ENCODE measurements at regions of chr16 and their contacts with region 1.

Region 1: DNA sequence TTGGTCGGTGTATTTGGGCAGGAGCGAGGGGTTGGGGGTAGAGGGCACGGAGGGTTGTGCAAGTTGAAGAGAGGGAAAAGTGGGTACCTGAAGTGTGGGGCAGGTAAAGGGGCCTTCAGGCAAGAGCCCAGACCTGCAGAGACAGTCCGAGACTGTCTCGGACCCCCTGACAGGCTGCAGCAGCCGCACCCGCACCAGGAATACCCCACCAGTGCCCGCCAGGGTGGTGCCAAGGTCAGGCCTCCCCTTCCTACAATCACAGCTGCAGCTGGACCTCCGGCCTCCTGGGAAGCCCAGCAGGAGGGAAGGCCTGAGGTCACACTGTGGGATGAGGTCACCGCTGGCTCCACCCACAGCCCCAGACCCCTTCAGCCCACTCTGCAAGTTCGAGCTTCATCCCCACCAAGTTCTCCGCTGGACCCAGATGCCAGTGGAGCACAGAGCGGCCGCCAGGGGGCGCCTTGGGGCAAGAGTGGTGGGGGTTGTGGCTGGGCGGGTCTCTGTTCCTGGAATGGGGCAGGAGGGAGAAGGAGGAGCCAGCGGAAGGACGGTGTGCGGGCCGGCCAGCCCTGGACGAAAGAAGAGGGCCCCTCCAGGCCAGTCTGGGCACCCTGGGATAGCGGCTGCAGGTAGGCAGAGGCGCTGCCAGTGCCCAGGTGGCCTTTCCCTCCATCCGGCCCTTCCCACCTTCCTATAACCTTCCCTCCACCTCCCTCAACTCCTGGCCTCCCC is at the start of gene HSD3B7:
- DNase-seq: peak; percentile 95
- CTCF ChIP-seq: peak; percentile 85

Region 2: GRCh38 chr16:30893744-30894539 is 90.9 kb before region 1 on chr16 and contains the start of gene BCL7C:
- in situ Hi-C with region 1: no loop called
- DNase-seq: peak; percentile 93
- CTCF ChIP-seq: peak; percentile 74

Region 3: DNA sequence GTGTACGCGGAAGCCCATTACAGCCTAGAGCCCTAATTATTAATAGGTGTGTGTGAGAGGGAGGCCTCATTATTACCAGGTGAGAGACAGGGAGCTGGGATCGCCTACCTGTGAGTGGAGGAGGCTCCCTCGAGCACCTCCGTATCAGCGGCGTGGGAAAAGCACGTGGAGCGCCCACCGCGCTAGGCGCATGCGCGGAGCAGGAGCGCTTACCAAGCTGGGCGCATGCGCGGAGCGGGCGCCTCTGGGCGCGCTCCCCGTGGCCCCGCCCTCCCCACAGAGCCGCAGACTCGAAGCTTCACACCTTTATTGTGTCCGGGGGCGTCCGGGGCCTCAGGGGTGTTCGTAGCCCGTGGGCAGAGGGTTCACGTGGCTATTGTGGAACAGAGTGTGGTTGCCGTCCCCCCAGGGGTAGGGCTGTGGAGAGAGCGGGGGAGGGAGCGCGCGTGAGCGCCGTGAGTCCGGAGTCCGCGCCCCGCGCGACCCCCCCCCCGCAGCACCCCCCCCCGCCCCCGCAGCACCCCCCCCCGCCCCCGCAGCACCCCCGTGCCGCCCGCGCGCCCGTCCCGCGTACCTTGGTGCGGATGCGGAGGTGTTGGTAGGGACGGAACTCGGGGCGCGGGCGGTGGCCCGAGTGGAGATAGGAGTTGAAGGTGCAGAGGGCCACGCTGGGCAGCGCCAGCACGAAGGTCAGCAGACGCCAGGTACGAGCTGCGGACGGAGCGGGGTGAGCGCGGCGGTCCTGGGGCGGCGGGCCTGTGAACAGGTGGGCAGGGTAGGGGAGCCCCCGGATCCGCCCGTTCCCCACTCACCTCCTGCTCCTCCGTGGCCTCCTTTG is 442.8 kb after region 1 on chr16:
- in situ Hi-C with region 1: loop called (anchors 25 kb)
- DNase-seq: peak; percentile 66
- CTCF ChIP-seq: no peak